ENCODE measurements at regions of chr9 and their contacts with region 1.

Region 1: DNA sequence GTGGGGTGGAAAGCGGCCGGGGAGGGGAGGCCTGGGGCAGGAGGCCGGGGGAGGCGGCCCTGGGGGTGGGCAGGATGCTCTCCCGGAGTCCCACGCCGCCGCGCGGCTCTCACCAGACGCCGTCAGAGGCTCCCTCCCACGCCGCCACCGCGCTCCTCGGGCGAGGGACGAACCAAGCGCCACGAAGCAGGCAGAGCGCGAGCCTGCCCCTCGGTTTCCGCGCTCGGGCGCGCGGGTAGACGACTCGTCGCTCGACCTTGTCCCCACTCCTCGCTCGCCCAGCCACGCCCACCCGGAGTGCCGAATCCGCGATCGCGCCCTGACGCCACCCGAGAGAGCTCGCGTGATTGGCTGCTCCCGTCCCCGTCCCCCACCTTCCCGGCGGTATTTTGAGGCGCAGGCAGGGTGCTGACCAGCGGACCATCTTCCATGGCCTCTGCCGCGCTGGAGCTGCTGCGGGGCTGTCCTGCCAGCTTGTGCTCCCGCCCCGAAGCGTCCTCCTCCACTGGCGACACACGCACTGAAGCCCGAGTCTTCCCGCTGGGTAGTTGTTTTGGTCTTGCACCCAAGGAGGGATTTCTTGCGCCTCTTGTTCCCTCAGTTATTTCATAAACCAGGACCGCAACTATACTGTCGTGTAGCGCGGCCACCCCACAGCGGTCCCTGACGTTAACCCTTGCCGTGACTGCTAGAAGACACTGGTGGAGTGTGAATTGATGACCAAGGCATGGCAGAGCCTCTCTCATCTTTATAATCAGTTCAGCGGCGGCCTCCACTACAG is at the start of gene GNE:
- DNase-seq: peak; percentile 99 to 100 (median 100)

Region 2: GRCh38 chr9:35789541-35789940 is 468.9 kb before region 1 on chr9:
- intact Hi-C with region 1: no loop called
- DNase-seq: no peak

Region 3: GRCh38 chr9:36190388-36191287 is 67.8 kb before region 1 on chr9 and contains the start of gene CLTA:
- intact Hi-C with region 1: loop called (anchors 2 kb)
- DNase-seq: peak; percentile 93 to 99 (median 98)

Region 4: DNA sequence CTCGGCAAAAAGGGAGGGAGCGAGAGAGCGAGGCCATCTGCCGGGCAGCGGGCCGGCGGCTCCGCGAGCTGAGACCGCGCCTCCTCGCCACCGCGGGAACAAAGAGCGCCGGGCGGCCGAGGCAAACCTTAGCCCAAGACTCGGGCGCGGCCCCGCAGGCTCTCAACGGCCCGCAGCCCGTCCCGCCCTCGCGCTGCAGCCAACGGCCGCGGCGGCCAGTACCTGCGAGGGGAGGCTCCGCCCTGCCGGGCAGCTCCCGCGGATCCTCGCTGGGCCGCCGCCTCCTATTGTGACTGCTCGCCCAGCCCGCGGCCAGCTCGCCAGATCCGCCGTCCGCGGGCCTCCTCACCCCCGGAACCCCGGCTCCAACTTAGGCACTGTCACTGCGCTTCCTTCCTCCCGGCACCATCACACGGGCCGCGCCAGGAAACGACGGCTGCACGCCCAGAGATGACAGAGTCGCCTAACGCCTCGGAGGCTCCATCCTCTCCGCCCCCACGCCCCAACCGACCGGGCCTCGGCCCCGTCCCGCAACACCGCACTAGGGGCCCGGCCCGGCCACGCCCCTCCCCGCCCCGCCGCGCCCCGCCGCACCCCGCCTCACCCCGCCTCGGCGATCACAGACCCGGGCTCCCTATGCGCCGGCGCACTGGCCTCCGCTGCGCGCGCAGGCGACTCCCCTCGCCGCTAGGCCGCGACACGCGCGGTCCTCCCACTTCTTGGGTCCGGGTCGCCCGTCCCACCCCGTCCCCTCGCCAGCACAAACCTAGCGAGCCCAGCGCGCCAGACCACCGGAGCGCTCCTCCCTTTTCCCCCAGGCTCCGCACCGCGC is 142.2 kb after region 1 on chr9:
- intact Hi-C with region 1: loop called (anchors 5 kb)
- DNase-seq: peak; percentile 79 to 97 (median 84)

Measured in posterior cingulate gyrus (tissue), 11 donors.